A549 (cell line): ENCODE measurements at regions of chr7 and their contacts with region 1.

Region 1: GRCh38 chr7:139016931-139017511 is 18.8 kb downstream of the ZC3HAV1L start:
- DNase-seq: peak; percentile 80 to 95
- ATAC-seq: peak; percentile 97
- H3K4me3 ChIP-seq: no peak overlapping the region
- H3K27ac ChIP-seq: no peak overlapping the region
- H3K4me1 ChIP-seq: no peaks in the 10 kb centered on the region
- CTCF ChIP-seq: peak; percentile 78
- EP300 ChIP-seq: no peak
- POLR2A ChIP-seq: no peak
- RAD21 ChIP-seq: peak; percentile 74 to 79

Region 2: DNA sequence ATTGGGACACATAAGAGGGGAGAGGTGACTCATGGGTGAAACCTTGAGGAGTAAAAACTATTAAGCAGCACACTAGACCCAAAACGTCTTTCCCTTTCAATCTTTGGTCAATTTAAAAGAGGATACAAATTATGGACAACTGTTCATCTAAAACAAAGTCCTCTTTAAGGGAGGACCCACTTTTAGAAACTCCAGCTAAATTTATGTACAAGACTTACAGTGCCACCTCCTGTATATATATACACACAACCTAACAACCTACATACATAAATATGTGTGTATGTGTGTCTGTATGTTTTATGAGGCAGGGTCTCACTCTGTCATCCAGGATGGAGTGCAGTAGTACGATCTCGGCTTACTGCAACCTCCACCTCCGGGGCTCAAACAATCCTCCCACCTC is 110.6 kb after region 1 on chr7:
- CTCF ChIA-PET with region 1: interaction called, 10 read pairs
- POLR2A ChIA-PET with region 1: no interaction called
- DNase-seq: peak in 1 of 2 experiments; percentile 23
- ATAC-seq: peak in 1 of 2 experiments; percentile 55; a peak in 2 of 6 replicates
- H3K4me3 ChIP-seq: no peak overlapping the region
- H3K27ac ChIP-seq: no peak overlapping the region
- H3K4me1 ChIP-seq: peaks cover 12% of the 10 kb centered on the region; the same call in 2 of the 3 replicates
- CTCF ChIP-seq: no peak
- EP300 ChIP-seq: no peak
- POLR2A ChIP-seq: no peak
- RAD21 ChIP-seq: peak; percentile 24 to 36; a peak in 3 of 5 replicates

Region 3: GRCh38 chr7:139180700-139181311 is 163.8 kb after region 1 on chr7:
- CTCF ChIA-PET with region 1: no interaction called
- POLR2A ChIA-PET with region 1: no interaction called
- DNase-seq: no peak
- ATAC-seq: no peak
- H3K4me3 ChIP-seq: no peak overlapping the region
- H3K27ac ChIP-seq: no peak overlapping the region
- H3K4me1 ChIP-seq: no peaks in the 10 kb centered on the region
- CTCF ChIP-seq: no peak
- EP300 ChIP-seq: no peak
- POLR2A ChIP-seq: no peak
- RAD21 ChIP-seq: no peak